PC-3 (cell line): ENCODE measurements at regions of chr6 and their contacts with region 1.

Region 1: DNA sequence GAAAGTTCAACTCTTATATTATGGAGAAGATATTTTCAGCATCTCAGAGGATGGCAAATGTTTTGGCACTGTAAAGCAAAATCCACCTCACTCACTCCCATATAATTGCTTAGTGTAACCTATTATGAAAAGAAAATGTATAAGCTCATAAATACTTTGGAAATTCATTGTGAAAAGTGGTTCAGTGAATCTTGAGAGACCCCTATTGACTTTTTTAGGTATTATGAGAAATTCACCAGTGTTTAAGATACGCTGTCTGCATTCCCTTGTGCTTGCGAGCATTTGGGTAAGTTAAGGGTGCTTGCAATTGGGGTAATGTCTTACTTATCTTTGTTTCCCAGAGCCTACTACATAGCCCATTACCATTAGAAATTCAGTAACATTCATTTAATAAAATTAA is 66.3 kb upstream of the BMP5 start:
- DNase-seq: peak; percentile 43
- ATAC-seq: no peak
- H3K4me3 ChIP-seq: no peak overlapping the region
- H3K27ac ChIP-seq: no peak overlapping the region
- H3K4me1 ChIP-seq: no peaks in the 10 kb centered on the region
- H3K27me3 ChIP-seq: no peaks in the 10 kb centered on the region
- CTCF ChIP-seq: peak; percentile 59

Region 2: DNA sequence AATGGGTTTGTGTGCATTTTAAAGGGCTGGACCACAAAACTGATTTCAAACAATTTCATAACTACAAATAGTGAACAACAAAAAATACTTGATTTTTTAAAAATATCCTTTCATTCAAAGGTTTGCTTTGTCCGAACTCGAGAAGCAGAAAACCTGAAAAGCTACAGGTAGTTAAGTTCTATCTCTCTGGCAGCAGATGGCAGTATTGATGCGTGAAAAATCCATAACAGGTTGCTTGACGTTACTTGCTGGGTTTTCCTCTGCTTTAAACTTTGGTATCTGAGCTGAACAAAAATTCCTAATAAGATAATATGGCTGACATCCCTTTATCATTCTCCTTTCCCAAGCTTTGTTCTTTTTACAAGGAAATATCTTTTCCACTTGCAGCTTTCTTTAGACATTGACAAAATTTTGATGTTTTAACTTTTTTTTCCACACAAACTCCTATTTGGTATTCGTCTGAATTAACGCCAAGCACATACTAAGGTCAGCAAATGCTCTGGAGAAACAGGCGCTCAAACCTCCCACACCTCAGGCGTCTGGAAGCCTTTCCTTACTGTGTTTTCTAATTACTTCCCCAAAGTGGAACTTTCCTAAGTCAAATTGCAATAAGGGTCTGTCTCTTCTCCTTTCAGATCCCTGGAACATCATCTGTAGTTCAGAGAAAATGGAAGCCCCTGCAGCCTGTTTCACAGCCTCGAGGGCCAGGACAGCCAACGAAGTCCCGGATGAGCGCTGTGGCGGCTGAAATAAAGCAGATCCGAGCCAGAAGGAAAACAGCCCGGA is 664.8 kb before region 1 on chr6:
- CTCF ChIA-PET with region 1: interaction called, 13 read pairs
- POLR2A ChIA-PET with region 1: no interaction called
- intact Hi-C with region 1: no loop called
- DNase-seq: peak; percentile 73
- ATAC-seq: peak; percentile 46; the same call in 1 of the 2 replicates
- H3K4me3 ChIP-seq: no peak overlapping the region
- H3K27ac ChIP-seq: no peak overlapping the region
- H3K4me1 ChIP-seq: no peaks in the 10 kb centered on the region
- H3K27me3 ChIP-seq: peaks cover 58% of the 10 kb centered on the region
- CTCF ChIP-seq: peak; percentile 79

Region 3: GRCh38 chr6:55617272-55617671 is 324.4 kb before region 1 on chr6:
- CTCF ChIA-PET with region 1: no interaction called
- POLR2A ChIA-PET with region 1: no interaction called
- intact Hi-C with region 1: loop called (anchors 5 kb)
- DNase-seq: peak; percentile 76
- ATAC-seq: peak; percentile 86
- H3K4me3 ChIP-seq: no peak overlapping the region
- H3K27ac ChIP-seq: no peak overlapping the region
- H3K4me1 ChIP-seq: no peaks in the 10 kb centered on the region
- H3K27me3 ChIP-seq: no peaks in the 10 kb centered on the region
- CTCF ChIP-seq: peak; percentile 86